Endothelial cell of umbilical vein (primary cell): ENCODE measurements at regions of chr5 and their contacts with region 1.

Region 1: DNA sequence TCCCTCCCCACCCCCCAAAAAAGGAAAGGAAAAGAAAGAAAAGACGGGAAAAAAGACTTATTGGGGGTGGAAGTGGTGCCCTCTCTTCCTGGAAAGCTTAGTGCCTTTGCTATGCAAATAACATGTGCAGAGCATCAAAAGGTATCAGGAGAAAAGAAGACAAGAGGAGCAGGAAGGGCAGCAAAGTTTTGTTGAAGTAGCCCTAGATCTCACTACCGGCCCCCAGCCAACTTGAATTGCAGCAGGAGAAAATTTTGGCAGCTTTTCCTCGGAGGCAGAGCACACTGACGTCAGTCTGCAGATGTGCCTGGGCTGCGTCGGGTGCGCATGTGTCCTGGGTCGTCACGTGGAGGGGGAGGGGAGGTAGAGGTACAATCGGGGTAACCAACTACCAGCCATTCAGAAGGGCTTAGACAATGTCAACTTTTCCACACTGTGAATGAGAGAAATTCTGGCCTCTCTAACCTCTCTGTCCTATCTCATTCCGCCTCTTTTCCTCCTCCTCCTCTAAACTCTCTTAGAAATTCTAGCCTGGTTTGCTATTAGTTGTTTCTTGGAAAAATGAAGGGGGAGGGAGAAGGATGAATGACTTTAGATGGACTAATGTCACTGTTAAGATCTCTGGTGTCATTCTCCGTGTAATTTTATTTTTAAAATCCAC is at the start of gene ADAMTS6:
- DNase-seq: peak; percentile 94
- H3K4me3 ChIP-seq: peak within 1 kb of the TSS; percentile 64 to 98 (median 96)
- H3K27ac ChIP-seq: peak within 1 kb of the TSS; percentile 87
- H3K4me1 ChIP-seq: peaks cover 36% of the 10 kb centered on the region
- H3K27me3 ChIP-seq: no peaks in the 10 kb centered on the region
- CTCF ChIP-seq: no peak
- POLR2A ChIP-seq: peak; percentile 55
- total RNA-seq, gene ADAMTS6: 43.4 and 57.4 TPM in 2 replicates

Region 2: DNA sequence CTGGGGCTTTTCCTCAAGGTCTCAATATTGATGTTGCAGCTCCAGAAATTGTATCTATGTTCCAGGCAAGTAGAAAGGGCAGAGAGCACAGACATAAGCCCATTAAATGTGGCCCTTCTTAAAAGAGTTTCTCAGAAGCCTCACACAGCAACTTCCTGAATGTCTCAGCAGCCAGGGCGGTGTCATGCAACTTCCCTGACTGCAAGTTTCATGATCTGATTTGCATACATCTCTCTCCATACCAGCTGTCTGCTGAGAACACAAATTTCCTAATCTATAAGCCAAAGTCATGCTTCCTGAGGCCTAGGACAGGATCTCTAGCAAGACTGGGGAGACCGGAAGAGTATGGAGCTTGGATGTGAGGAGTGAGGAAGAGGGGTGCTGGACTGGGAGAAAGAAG is 963.0 kb before region 1 on chr5:
- CTCF ChIA-PET with region 1: no interaction called
- POLR2A ChIA-PET with region 1: no interaction called
- dilution Hi-C with region 1: no loop called
- intact Hi-C with region 1: no loop called
- DNase-seq: no peak
- H3K4me3 ChIP-seq: no peak overlapping the region
- H3K27ac ChIP-seq: no peak overlapping the region
- H3K4me1 ChIP-seq: no peaks in the 10 kb centered on the region
- H3K27me3 ChIP-seq: no peaks in the 10 kb centered on the region
- CTCF ChIP-seq: no peak
- POLR2A ChIP-seq: no peak

Region 3: DNA sequence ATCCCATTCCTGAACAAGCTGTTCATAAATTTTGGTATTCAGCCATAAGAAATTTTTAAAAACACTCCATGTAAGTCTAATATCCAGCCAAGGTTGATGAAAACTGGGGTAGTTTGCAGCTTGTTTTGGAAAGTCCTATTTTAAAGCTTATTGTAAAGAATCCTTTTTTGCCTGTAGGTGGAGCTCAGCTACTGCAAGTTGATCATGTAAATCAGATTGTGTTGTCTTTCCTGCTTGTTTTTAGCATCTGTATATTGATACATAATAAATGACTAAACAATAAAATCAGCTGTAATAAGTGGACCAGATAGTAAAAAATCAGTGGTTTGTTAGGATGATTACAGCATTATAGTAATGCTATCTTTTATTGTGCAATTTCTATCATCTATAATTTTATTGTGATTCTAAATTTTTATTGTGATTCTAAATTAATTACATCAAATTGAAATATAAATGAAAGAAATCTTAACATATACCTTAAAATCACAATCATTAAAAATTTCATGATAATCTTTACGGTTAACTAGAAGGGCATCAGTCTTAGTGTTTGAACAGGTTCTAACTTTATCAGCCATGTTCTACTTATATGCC is 670.6 kb before region 1 on chr5:
- CTCF ChIA-PET with region 1: interaction called, 275 read pairs
- POLR2A ChIA-PET with region 1: interaction called, 3 read pairs
- dilution Hi-C with region 1: no loop called
- intact Hi-C with region 1: loop called (anchors 1 kb)
- DNase-seq: peak; percentile 65
- H3K4me3 ChIP-seq: no peak overlapping the region
- H3K27ac ChIP-seq: no peak overlapping the region
- H3K4me1 ChIP-seq: no peaks in the 10 kb centered on the region
- H3K27me3 ChIP-seq: no peaks in the 10 kb centered on the region
- CTCF ChIP-seq: peak; percentile 47
- POLR2A ChIP-seq: no peak

Region 4: DNA sequence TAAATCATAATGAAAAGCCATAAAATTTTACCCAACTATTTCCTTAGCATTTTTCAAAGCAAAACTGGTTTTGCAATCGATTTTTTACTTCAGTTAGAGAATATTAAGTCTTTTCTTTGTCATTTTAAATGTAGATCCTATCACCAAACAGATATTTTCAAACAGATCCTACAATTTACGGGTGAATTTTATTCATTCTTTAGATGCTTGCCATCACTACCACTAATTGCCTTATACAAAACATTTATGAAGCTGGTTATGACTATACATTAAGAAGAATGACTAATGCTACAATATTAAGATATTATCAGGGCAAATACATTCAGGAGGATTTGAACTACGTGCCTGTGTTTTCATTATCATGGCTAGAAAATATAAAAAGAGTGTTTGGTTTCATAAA is 516.2 kb before region 1 on chr5:
- CTCF ChIA-PET with region 1: interaction called, 135 read pairs
- POLR2A ChIA-PET with region 1: no interaction called
- dilution Hi-C with region 1: no loop called
- intact Hi-C with region 1: no loop called
- DNase-seq: no peak
- H3K4me3 ChIP-seq: no peak overlapping the region
- H3K27ac ChIP-seq: no peak overlapping the region
- H3K4me1 ChIP-seq: no peaks in the 10 kb centered on the region
- H3K27me3 ChIP-seq: no peaks in the 10 kb centered on the region
- CTCF ChIP-seq: no peak
- POLR2A ChIP-seq: no peak

Region 5: DNA sequence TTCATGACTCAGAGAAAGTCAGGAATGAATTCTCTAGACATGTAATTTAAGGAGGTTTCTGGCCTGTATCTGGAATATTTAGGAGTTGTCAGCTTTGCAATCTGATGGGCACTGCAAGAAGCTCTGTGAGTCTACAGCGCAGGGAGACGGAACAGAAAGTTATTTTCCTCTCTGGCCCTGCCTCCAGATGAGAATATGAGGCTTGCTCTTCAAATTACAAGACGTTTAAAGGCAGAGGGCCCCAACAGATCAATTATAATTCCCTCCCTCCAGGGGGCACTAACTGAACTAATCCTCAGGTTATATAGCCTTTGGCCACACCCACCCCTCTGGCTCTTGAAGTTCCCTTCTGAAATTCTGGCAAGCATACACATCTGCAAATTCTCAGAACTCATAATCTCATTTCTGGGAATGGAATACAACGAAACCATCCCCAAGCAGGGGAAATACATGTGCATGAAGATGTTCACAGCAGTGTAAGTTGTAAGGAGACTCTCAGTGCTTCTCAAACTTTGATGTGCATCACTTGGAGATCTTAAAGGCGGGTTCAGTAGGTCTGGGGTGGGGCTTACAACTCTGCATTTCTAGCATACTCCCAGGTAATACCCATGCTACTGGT is 405.4 kb before region 1 on chr5:
- CTCF ChIA-PET with region 1: interaction called, 11 read pairs
- POLR2A ChIA-PET with region 1: no interaction called
- dilution Hi-C with region 1: no loop called
- intact Hi-C with region 1: loop called (anchors 2 kb)
- DNase-seq: peak; percentile 36
- H3K4me3 ChIP-seq: no peak overlapping the region
- H3K27ac ChIP-seq: no peak overlapping the region
- H3K4me1 ChIP-seq: peaks cover 23% of the 10 kb centered on the region
- H3K27me3 ChIP-seq: no peaks in the 10 kb centered on the region
- CTCF ChIP-seq: peak; percentile 32 to 36
- POLR2A ChIP-seq: no peak

Region 6: DNA sequence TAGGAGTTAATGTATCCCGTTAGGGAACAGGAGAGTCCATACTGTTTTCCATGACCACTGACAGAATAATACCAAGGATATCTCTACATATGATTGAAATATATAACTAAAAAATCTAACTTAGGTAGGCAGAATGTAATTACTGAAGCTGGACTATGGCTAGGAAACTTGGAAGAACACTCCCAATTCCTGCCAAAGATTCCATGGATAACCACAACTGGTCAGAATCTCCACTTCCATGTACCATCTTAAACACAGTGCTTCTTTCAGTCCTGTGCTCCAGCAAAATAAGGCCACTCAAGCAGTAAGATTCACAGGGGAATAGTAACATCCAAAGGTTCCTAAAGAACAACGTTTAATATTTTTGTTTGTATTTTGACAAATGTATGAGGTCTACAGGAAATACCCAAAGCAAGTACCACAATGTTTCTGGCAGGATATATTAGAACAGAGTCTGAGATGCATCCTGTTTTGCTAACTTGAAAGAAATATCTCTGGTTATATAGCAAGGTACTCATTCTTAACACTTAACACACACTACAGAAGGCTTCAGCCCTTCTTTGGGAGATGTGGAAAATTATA is 295.0 kb before region 1 on chr5:
- CTCF ChIA-PET with region 1: no interaction called
- POLR2A ChIA-PET with region 1: no interaction called
- dilution Hi-C with region 1: no loop called
- intact Hi-C with region 1: loop called (anchors 2 kb)
- DNase-seq: peak; percentile 59
- H3K4me3 ChIP-seq: no peak overlapping the region
- H3K27ac ChIP-seq: peak overlapping the region; percentile 40
- H3K4me1 ChIP-seq: peaks cover 36% of the 10 kb centered on the region
- H3K27me3 ChIP-seq: no peaks in the 10 kb centered on the region
- CTCF ChIP-seq: no peak
- POLR2A ChIP-seq: no peak

Region 7: GRCh38 chr5:65262649-65263059 is 219.1 kb before region 1 on chr5:
- CTCF ChIA-PET with region 1: interaction called, 12 read pairs
- POLR2A ChIA-PET with region 1: interaction called, 5 read pairs
- dilution Hi-C with region 1: no loop called
- intact Hi-C with region 1: loop called (anchors 2 kb)
- DNase-seq: peak; percentile 76
- H3K4me3 ChIP-seq: peak overlapping the region in 1 of 3 experiments; percentile 29
- H3K27ac ChIP-seq: peak overlapping the region; percentile 62
- H3K4me1 ChIP-seq: peaks cover 28% of the 10 kb centered on the region
- H3K27me3 ChIP-seq: no peaks in the 10 kb centered on the region
- CTCF ChIP-seq: no peak
- POLR2A ChIP-seq: no peak